ENCODE measurements at regions of chr20 and their contacts with region 1.

Region 1: GRCh38 chr20:38165089-38165989 is at the start of gene TGM2:
- DNase-seq: peak; percentile 91
- ATAC-seq: peak; percentile 87 to 90
- total RNA-seq, gene TGM2: 383 to 695 TPM

Region 2: DNA sequence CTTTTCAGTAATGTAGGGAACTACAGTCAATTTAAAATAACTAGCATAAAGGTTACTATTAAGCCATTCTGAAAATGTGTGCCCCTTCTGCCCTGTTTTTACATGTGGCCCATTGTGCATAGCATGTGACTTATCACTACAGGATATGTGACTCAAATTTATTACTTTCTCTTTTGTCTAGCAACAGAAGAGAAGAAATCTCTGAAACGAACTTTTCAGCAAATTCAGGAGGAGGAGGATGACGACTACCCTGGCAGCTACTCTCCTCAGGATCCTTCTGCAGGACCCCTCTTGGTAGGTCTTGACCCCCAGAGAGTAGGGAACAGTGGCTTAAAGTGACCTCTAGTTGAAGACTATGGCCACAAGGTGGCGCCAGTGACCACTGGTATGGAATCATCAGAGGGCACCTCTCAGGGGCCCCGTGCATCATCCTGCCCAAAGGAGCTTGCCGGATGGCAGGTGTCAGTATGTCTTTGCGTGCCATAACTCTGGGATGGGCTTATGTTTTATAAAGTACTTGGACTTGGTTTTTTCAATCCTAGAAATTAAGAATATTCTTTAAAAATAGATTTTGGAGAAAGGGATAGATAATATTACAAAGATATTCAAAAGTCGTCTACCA is 107.9 kb before region 1 on chr20:
- intact Hi-C with region 1: loop called in 1 of 2 experiments (anchors 5 kb)
- DNase-seq: peak; percentile 93
- ATAC-seq: peak; percentile 92 to 94

Region 3: DNA sequence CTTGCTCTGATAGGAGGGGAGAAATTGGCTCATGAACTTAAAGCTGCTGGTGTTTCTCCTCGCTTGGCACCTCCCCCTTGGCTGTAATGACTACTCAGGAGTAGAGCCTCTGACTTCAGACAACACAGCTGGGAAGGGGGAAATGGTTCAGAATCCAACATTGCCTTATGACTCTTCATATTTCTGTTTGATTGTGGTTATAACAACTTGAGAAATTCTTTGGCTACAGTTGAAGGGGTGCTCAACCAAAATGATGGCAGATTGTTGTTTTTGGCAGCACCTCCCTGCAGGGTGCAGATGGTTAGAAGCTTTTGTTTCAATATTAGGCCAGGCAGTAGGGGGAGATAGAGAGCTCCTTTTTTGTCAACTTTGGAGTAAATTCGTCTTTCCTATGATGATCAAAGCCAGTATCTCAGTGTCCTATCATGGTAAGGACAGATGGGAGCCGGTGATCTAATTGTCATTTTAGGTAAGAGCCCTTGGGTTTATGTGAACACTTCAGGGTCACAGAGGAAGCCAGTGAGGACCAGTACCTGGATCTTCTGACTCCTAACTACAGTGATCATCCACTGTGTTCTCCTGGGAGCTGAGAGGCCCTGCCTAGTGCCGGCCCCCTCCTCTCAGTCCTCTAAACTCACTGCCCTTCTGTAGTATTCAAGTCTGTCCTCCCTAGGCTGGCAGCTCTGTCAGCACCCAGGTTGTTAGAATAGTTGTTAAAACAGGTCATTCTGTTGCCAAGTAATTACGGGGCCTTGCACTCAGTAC is 91.8 kb before region 1 on chr20:
- intact Hi-C with region 1: loop called (anchors 5 kb)
- DNase-seq: peak; percentile 74
- ATAC-seq: peak; percentile 87 to 94

Region 4: DNA sequence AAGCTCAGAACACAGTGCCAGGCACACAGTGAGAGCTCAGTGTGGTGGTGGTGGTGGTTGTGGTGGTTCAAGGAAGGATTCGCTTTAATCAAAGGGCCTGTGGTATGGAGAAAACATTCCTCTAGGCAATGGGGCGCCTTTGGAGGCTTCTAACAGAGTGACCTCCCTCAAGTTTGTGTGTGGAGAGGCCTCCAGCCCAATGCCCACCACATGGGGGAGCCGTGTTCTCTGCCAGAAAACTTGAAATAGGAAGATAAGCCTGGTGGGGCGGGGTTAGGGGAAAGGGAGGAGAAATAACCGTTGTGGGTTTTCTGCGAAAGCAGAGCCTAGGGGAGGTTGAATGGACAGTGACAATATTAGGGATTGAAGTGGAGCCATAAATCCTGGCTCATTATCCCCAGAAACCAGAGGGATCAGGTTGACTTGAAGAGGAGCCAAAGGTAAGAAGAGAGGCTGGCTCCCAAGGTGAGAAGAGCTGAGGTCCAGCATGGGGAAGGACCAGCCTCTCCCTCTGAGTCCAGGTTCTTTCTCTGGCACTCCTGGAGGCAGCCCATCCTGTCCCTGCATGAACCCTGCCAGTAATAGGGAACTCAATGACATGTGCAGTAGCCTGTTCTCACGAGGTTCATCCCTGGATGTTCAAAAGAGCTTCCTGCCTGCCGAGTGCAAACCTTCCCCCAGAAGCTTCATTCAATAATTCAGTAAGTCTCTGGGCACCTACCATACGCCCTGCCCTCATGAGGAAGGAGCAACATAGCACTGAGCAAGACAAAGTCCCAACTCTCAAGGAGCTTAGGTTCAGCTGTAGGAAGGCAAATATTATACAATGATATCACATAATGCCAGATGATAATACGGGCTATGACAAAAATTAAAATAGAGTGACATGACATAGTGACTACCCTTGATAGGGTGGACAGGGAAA is 51.7 kb before region 1 on chr20:
- intact Hi-C with region 1: no loop called
- DNase-seq: no peak
- ATAC-seq: no peak